Right ventricle myocardium inferior (tissue), 1 donor: ENCODE measurements at regions of chr9 and their contacts with region 1.

Region 1: DNA sequence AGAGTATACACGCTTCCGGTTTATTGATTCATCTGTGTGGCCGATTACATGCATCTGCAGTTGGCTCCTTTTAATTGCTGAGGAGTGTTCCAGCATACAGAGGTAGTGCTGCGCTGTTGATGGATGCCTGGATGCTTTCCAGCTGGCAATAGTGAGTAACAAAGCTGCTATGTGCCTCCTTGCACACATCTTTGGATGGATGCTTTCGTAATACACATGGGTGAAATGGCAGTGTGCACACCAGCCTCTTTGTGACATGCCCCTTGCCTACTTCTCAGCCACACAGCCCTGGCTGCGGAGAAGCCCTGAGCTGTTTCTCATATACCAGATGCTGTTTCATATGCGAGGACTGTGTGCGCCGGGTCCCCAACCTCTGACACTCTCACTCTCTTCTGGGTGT is 151.0 kb downstream of the GADD45G start:
- DNase-seq: no peak
- ATAC-seq: peak; percentile 45

Region 2: DNA sequence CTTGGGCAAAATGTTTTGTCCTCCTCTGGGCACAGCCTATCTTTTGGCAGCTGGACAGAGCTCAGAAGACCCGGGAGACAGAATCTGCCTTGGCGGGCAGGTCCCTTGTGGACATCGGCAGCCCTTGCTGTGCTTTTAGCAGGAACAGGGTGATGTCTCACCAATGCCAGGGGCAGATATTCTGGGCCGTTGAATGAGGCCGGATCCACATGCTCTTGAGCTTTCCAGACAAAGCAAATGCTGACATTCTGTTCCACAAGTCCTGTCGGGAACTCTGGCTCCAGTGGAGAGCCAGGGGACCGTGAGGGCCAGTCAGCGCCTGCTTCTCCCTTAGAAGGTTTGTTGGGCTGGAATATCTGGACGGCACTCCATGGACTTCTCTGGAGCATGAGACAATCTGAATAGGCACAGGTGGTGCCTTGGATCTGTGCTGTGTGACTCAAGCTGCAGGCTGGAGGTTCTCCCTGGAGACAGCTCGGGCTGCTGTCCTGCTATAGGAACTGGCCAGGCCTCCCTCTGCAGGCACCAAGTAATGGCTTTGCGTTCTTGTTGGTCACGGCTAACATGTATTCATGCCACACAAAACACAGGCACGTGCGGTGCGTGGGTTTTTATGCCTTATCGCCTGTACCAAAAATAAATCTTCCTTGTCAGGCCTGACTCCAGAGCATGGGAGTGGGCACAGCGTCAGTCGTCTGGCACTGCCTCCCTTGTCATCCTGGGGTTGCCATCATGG is 70.8 kb before region 1 on chr9:
- intact Hi-C with region 1: loop called (anchors 2 kb)
- DNase-seq: peak; percentile 82
- ATAC-seq: peak; percentile 90

Region 3: DNA sequence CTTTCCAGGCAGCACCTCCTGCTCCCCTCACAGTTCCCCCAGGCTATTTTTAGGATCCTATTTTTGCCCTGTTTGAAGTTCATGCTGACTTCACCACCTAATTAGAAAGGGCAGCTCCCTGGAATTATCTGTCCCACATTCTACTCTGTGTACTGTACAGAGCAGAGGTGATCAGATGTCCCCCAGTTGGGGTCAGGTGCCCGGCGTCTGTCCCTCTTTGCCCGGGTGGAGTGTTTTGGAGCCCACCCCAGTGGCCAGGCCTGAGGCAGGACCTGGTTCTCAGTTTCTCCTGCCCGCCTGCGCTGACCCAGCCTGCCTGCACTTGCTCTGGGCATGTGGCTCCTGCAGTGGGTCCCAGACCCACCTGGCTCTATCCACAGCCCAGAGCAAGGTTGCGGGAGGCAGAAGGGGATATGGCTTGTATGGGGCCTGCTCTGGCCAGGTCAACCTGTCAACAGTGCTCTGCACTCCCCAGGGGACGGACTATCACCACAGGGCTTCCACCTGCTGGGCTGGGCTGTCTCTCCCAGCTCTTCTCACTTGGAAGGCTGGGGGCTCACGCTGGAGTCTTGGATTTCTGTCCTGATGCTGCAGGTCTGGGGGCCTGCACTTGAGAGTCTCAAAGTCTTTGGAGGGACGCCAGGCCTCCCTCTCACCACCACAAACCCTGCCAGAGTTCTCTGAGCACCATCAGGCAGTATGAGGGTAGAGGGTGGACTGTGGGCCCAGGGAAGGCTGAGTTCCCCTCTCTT is 117.3 kb after region 1 on chr9:
- intact Hi-C with region 1: loop called (anchors 2 kb)
- DNase-seq: no peak
- ATAC-seq: peak; percentile 79

Region 4: GRCh38 chr9:89919169-89919681 is 163.4 kb after region 1 on chr9:
- intact Hi-C with region 1: loop called (anchors 1 kb)
- DNase-seq: no peak
- ATAC-seq: peak; percentile 91

Region 5: DNA sequence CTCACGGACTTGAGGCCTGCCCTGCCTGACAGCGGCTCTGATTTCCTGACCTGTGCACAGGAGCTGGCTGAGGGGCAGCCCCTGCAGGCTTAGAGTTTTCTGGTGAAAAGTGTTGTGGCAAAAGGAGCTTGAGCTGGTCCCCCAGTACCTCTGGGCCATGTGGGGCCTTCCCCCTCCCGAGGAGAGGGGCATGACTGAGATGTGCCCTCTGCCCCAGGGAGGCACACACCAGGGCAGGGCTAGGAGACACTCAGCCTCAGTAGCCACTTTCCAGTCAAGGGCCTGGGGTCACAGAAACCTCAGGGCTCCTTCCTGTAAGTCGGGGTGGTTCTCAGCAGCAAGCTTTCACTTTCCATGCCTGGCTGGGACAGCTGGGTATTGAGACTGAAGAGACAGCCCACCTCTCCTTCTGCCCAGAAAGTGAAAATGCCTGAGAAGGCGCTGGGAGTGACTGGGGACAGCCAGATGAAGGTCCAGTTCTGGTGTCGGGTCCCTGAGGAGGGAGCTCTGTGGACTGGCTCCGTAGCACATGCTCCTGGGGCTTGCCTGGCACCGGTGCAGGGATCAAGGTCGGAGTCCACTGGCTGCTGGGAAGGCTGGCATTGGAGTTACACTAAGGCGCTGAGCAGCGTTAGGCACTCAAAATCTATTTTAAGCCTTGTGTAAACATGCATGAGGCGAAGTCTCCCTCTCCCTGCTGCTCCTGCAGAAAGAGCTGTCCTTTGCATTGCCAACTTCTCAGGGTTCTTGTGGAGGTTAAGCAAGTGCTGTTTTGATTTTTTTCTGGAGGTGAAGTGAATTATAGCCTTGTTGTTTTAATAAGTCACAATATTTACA is 243.9 kb after region 1 on chr9:
- intact Hi-C with region 1: loop called (anchors 5 kb)
- DNase-seq: peak; percentile 80
- ATAC-seq: peak; percentile 88

Region 6: DNA sequence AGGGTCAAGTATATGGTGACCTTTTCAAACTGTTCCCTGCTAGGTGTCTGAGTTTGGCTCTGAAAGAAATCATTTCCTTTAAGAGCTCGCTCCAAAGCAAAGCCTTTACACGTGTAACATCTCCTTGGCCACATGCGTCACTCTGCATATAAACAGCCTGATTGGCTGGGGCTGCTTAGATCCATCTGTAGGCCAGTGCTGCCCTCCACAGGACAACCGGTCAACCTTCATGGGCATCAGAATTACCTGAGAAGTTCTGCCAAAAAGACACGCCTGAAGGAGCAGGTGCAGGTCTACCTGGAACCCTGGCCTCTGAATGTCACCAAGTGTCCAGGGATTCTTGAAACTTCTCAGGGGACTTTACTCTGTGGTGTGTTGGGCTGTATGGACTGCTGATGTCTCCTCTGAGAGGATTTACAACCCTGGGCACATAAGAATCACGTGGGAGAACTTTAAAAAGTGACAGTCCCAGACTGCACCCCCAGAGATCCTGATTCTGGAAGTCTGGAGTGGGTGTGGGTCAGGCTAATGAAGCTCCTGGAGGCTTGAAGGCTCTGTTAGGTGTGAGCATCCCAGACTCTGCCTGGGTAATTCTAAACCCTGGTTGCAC is 346.6 kb after region 1 on chr9:
- intact Hi-C with region 1: loop called (anchors 5 kb)
- DNase-seq: peak; percentile 80
- ATAC-seq: peak; percentile 83